ENCODE measurements at regions of chr7 and their contacts with region 1.

Region 1: DNA sequence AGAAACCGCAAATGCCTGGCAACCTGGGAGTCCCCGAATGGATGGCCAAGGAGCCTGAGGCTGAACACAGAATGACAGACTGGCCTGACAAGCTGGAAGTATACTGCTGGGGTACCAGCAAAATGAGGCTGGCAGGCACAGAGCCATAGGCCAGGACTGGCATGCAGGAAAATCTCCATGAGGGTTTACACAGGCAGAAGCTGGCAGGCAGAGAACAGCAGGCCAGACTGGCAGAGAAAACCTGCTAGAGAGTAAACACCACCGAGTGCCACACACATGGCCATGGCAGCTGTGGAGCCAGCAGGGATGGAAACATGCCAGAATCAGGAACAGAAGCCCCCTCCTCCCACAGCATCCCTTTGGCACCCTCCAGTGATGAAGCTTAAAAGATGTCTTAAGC is 63.4 kb downstream of the CRPPA start:
- DNase-seq: no peak
- ATAC-seq: no peak
- H3K4me3 ChIP-seq: no peak overlapping the region
- H3K27ac ChIP-seq: no peak overlapping the region
- H3K4me1 ChIP-seq: peaks cover 11% of the 10 kb centered on the region
- H3K27me3 ChIP-seq: no peaks in the 10 kb centered on the region
- CTCF ChIP-seq: no peak

Region 2: GRCh38 chr7:15729746-15730145 is 628.2 kb before region 1 on chr7:
- CTCF ChIA-PET with region 1: no interaction called
- POLR2A ChIA-PET with region 1: no interaction called
- intact Hi-C with region 1: no loop called
- DNase-seq: no peak
- ATAC-seq: no peak
- H3K4me3 ChIP-seq: no peak overlapping the region
- H3K27ac ChIP-seq: no peak overlapping the region
- H3K4me1 ChIP-seq: no peaks in the 10 kb centered on the region
- H3K27me3 ChIP-seq: no peaks in the 10 kb centered on the region; the same call in 1 of the 2 replicates
- CTCF ChIP-seq: no peak

Region 3: DNA sequence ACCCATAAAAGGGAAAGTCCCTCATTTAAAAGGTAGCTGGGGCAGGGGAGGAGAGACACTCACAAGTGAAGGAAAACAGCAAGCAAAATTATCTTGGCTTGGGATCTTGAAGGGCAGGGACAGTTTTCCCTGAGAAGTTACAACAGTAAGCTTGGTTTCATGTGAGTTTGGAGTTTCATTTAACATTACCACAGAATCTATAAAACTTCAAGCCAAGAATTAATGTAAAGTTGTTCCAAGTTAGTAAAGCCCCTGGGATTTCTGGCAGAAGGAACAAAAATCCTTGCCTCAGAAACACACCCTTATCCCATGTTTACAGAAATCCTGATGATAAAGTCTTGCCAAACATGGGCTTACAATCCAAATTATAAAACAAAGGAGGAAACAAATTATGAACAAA is 44.2 kb after region 1 on chr7:
- CTCF ChIA-PET with region 1: no interaction called
- POLR2A ChIA-PET with region 1: no interaction called
- intact Hi-C with region 1: loop called (anchors 1 kb)
- DNase-seq: peak; percentile 54
- ATAC-seq: peak; percentile 86
- H3K4me3 ChIP-seq: no peak overlapping the region
- H3K27ac ChIP-seq: peak overlapping the region; percentile 71
- H3K4me1 ChIP-seq: peaks cover 19% of the 10 kb centered on the region
- H3K27me3 ChIP-seq: no peaks in the 10 kb centered on the region
- CTCF ChIP-seq: no peak

Measured in PC-3 (cell line).